ENCODE measurements at regions of chr21 and their contacts with region 1.

Region 1: GRCh38 chr21:39296891-39297290 is 16.5 kb downstream of the BRWD1 start:
- DNase-seq: no peak
- ATAC-seq: no peak
- H3K4me3 ChIP-seq: no peak overlapping the region
- H3K4me3 Mint-ChIP-seq: no peak overlapping the region
- H3K27ac ChIP-seq: no peak overlapping the region
- H3K27ac Mint-ChIP-seq: peak overlapping the region; percentile 60
- H3K4me1 ChIP-seq: no peaks in the 10 kb centered on the region
- H3K4me1 Mint-ChIP-seq: peaks cover 43% of the 10 kb centered on the region
- H3K27me3 ChIP-seq: no peaks in the 10 kb centered on the region
- H3K27me3 Mint-ChIP-seq: no peaks in the 10 kb centered on the region
- CTCF ChIP-seq: no peak

Region 2: DNA sequence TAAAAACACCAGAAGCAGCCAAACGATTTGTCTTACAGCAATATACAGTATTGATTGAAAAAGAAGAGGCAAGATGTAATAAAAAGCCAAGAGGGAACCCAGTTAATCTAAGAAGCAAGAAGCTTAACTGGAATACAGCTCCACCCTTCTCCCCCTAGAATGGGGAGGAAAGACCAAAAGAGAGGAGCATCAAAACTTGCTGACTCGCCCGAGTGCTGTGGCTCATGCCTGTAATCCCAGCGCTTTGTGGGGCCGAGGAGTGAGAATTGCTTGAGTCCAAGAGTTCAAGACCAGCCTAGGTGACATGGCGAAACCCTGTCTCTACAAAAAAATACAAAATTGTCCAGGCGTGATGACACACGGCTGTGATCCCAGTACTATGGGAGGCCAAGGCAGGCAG is 15.7 kb before region 1 on chr21:
- CTCF ChIA-PET with region 1: interaction called, 6 read pairs
- POLR2A ChIA-PET with region 1: interaction called, 6 read pairs
- intact Hi-C with region 1: loop called in 1 of 2 experiments (anchors 2 kb)
- DNase-seq: no peak
- ATAC-seq: no peak
- H3K4me3 ChIP-seq: no peak overlapping the region
- H3K4me3 Mint-ChIP-seq: no peak overlapping the region
- H3K27ac ChIP-seq: no peak overlapping the region
- H3K27ac Mint-ChIP-seq: no peak overlapping the region
- H3K4me1 ChIP-seq: no peaks in the 10 kb centered on the region
- H3K4me1 Mint-ChIP-seq: peaks cover 12% of the 10 kb centered on the region
- H3K27me3 ChIP-seq: no peaks in the 10 kb centered on the region
- H3K27me3 Mint-ChIP-seq: no peaks in the 10 kb centered on the region
- CTCF ChIP-seq: no peak

Region 3: GRCh38 chr21:39349211-39350093 is 52.6 kb after region 1 on chr21:
- CTCF ChIA-PET with region 1: interaction called, 3 read pairs
- POLR2A ChIA-PET with region 1: interaction called, 3 read pairs
- intact Hi-C with region 1: loop called in 1 of 2 experiments (anchors 10 kb)
- DNase-seq: peak; percentile 91 to 98 (median 97)
- ATAC-seq: peak; percentile 83
- H3K4me3 ChIP-seq: peak overlapping the region; percentile 74 to 75
- H3K4me3 Mint-ChIP-seq: peak overlapping the region; percentile 96
- H3K27ac ChIP-seq: peak overlapping the region; percentile 89 to 95
- H3K27ac Mint-ChIP-seq: peak overlapping the region; percentile 99
- H3K4me1 ChIP-seq: peaks cover 42% of the 10 kb centered on the region
- H3K4me1 Mint-ChIP-seq: peaks cover 38% of the 10 kb centered on the region
- H3K27me3 ChIP-seq: no peaks in the 10 kb centered on the region
- H3K27me3 Mint-ChIP-seq: no peaks in the 10 kb centered on the region
- CTCF ChIP-seq: no peak

Measured in CD8-positive, alpha-beta T cell (primary cell).